Cardiac septum (tissue), 1 donor: ENCODE measurements at regions of chr3 and their contacts with region 1.

Region 1: GRCh38 chr3:151660885-151661284 is 72.8 kb upstream of the AADACL2 start:
- DNase-seq: no peak

Region 2: GRCh38 chr3:151468284-151468917 is 192.5 kb before region 1 on chr3:
- intact Hi-C with region 1: loop called (anchors 10 kb)
- DNase-seq: no peak

Region 3: DNA sequence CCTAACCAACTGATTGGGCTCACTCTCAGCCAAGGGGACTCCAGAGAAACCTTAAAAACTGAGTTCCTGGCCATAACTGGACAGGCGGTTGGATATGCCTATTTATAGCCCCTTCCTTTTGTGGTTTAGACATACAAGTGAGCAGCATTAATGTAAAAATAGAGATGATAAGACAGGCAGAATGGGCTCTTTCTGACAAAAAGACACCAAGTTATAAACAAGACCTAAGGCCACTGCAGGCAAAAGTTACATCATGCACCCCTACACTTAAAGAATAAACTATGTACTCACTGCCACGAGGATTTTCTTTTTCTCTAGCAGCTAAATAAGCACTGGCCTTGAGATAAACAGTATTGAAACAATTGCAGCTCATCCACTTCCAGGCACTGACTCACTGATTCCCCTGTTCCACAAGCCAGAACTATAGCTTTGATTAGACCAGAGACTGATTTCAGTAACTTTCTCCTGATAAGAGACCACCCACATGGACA is 242.7 kb after region 1 on chr3:
- intact Hi-C with region 1: no loop called
- DNase-seq: no peak

Region 4: GRCh38 chr3:151960961-151961579 is 300.2 kb after region 1 on chr3:
- intact Hi-C with region 1: no loop called
- DNase-seq: no peak